ENCODE measurements at regions of chr5 and their contacts with region 1.

Region 1: GRCh38 chr5:122999945-123000563 is 36.5 kb downstream of the PPIC start:
- DNase-seq: peak; percentile 75
- H3K4me3 Mint-ChIP-seq: no peak overlapping the region
- H3K27ac Mint-ChIP-seq: no peak overlapping the region
- H3K4me1 Mint-ChIP-seq: no peaks in the 10 kb centered on the region
- H3K27me3 Mint-ChIP-seq: no peaks in the 10 kb centered on the region
- CTCF ChIP-seq: peak; percentile 74

Region 2: GRCh38 chr5:122515709-122516431 is 484.2 kb before region 1 on chr5:
- CTCF ChIA-PET with region 1: interaction called, 3 read pairs
- POLR2A ChIA-PET with region 1: no interaction called
- intact Hi-C with region 1: loop called (anchors 1 kb)
- DNase-seq: peak; percentile 89
- H3K4me3 Mint-ChIP-seq: no peak overlapping the region
- H3K27ac Mint-ChIP-seq: no peak overlapping the region
- H3K4me1 Mint-ChIP-seq: no peaks in the 10 kb centered on the region
- H3K27me3 Mint-ChIP-seq: no peaks in the 10 kb centered on the region
- CTCF ChIP-seq: peak; percentile 94

Region 3: DNA sequence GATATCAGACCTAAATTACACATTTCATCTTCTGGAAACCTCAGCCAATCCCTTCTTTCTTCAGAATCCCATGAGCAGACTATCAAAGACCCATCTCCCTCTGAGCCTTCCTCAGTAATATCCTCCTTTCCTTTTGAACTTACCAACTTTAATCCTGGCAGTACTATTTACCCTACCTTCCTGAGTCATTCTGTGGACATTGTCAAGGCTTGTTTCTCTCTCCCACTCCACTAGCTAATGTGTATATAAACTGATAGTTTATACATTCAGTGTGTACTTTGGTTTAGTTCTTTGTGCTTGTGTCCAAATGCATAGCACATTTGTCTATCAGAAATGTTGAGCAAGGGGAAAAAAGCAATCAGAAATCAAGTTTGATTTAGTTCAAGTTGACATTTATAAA is 1080.2 kb after region 1 on chr5:
- CTCF ChIA-PET with region 1: no interaction called
- POLR2A ChIA-PET with region 1: no interaction called
- intact Hi-C with region 1: no loop called
- DNase-seq: peak; percentile 45
- H3K4me3 Mint-ChIP-seq: no peak overlapping the region
- H3K27ac Mint-ChIP-seq: peak overlapping the region; percentile 2
- H3K4me1 Mint-ChIP-seq: peaks cover 14% of the 10 kb centered on the region
- H3K27me3 Mint-ChIP-seq: no peaks in the 10 kb centered on the region
- CTCF ChIP-seq: no peak